Activated CD4-positive, alpha-beta memory T cell treated with anti-CD3 and anti-CD28 coated beads, Interleukin-2, amount 10 ng/mL, durations not matched to agents 7 days and 5 days (primary cell): ENCODE measurements at regions of chr6 and their contacts with region 1.

Region 1: DNA sequence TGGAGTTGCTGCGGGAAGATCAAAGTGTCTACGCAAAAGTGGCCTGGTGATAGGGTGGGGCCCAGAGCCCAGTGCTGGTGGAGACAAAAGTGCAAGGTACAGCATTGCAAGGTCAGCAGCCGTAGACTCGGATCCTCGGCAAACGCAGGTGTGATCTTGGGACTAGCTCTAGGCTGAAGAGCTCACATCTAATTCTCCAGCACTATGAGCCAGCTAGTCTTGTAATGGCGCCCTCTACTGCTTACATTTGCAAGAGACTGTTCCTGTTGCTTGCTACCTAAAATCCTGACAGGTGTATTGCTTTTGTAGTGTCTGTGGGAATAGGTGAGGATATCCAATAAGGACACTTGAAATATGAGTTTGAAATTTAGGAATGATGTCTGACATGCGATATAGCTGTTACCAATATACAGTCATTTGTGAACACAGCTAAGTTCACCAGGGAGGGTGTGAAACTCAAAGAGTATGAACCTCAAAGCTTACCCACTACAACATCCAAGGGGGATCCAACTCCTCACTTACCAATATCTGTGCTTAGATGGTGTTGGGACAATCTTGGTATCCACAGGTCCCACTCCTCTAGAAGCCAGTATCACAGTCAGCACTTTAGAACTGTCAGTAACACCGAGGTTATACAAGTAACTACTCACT is 58.4 kb downstream of the PDE7B start:
- DNase-seq: peak; percentile 60
- H3K4me3 Mint-ChIP-seq: no peak overlapping the region
- H3K27ac Mint-ChIP-seq: no peak overlapping the region
- H3K4me1 Mint-ChIP-seq: peaks cover 3% of the 10 kb centered on the region
- H3K27me3 Mint-ChIP-seq: no peaks in the 10 kb centered on the region

Region 2: DNA sequence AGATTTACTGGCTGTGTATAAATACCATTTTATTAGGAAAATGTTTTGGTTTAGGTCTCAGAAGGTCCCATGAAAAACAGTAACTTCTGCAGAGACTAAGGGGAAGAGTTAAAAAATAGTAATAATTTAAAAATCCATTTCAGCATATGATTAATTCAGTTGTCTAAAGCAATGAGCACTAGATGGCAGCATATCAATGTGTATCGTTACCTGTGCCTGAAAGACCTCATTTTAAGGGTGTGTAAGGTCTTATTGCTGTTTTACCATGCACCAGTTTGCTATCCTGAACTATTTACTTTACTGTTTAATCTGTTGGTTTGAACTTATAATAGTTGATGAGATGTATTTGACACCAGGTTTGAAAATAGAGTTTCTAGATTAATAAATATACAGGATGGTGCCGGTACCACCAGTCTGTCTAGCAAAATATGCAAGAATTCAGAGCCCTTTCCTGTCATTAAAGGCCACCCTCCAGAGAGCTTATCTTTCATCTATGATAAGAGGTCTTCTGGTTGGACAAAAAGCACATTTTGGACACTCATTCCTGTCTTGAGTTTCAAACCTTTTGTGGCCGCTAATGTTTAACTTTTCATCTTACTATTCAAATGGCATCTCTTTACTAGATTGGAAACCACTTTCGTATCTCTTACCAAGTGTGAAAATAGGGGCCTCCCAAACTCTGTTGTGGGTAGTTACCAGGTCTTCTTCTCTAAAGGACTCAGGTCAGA is 403.4 kb before region 1 on chr6:
- CTCF ChIA-PET with region 1: interaction called, 18 read pairs
- POLR2A ChIA-PET with region 1: no interaction called
- DNase-seq: no peak
- H3K4me3 Mint-ChIP-seq: no peak overlapping the region
- H3K27ac Mint-ChIP-seq: peak overlapping the region; percentile 12
- H3K4me1 Mint-ChIP-seq: peaks cover 7% of the 10 kb centered on the region
- H3K27me3 Mint-ChIP-seq: peaks cover 1% of the 10 kb centered on the region

Region 3: GRCh38 chr6:135675862-135676261 is 234.0 kb before region 1 on chr6:
- CTCF ChIA-PET with region 1: interaction called, 21 read pairs
- POLR2A ChIA-PET with region 1: no interaction called
- DNase-seq: peak; percentile 30
- H3K4me3 Mint-ChIP-seq: no peak overlapping the region
- H3K27ac Mint-ChIP-seq: no peak overlapping the region
- H3K4me1 Mint-ChIP-seq: peaks cover 23% of the 10 kb centered on the region
- H3K27me3 Mint-ChIP-seq: peaks cover 4% of the 10 kb centered on the region

Region 4: GRCh38 chr6:135880066-135880972 is 29.5 kb before region 1 on chr6:
- CTCF ChIA-PET with region 1: interaction called, 10 read pairs
- POLR2A ChIA-PET with region 1: no interaction called
- DNase-seq: peak; percentile 71
- H3K4me3 Mint-ChIP-seq: peak overlapping the region; percentile 76
- H3K27ac Mint-ChIP-seq: peak overlapping the region; percentile 95
- H3K4me1 Mint-ChIP-seq: peaks cover 31% of the 10 kb centered on the region
- H3K27me3 Mint-ChIP-seq: no peaks in the 10 kb centered on the region

Region 5: DNA sequence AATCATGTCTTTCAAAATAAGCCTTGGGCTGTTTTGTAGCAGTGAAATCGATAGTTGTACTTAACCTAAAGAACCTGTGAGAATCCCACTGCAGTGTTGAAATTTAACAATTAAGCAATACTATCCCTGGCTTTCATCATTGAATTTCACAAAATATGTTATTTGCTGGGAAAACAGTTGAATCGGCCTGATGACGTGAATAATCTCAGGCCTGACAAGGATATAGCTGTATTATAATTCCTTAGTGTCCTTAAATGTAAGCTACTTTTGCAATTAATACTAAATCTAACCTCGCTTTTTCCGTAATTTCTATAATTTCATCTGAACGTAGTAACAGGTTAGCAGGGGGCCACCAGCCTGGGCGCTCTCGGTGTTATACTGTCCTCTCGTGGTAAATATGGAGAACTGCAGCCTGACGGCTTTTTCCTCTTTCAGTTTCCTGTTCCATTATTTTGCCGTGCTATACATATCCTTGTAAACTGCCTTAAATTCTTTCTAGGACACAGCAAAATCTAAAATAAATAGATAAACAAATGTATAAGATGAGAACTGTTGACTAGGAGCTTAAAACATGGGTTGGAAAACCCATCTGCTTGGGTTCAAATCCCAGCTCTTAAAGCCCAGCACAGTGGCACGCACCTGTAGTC is 316.3 kb after region 1 on chr6:
- CTCF ChIA-PET with region 1: interaction called, 17 read pairs
- POLR2A ChIA-PET with region 1: no interaction called
- DNase-seq: peak; percentile 59
- H3K4me3 Mint-ChIP-seq: no peak overlapping the region
- H3K27ac Mint-ChIP-seq: peak overlapping the region; percentile 7
- H3K4me1 Mint-ChIP-seq: peaks cover 8% of the 10 kb centered on the region
- H3K27me3 Mint-ChIP-seq: peaks cover 1% of the 10 kb centered on the region